ENCODE measurements at regions of chr2 and their contacts with region 1.

Region 1: GRCh38 chr2:24613154-24613814 is 122.2 kb downstream of the NCOA1 start:
- DNase-seq: peak; percentile 30
- H3K4me3 Mint-ChIP-seq: no peak overlapping the region
- H3K27ac Mint-ChIP-seq: no peak overlapping the region
- H3K4me1 Mint-ChIP-seq: no peaks in the 10 kb centered on the region
- H3K27me3 Mint-ChIP-seq: no peaks in the 10 kb centered on the region
- CTCF ChIP-seq: peak; percentile 43

Region 2: DNA sequence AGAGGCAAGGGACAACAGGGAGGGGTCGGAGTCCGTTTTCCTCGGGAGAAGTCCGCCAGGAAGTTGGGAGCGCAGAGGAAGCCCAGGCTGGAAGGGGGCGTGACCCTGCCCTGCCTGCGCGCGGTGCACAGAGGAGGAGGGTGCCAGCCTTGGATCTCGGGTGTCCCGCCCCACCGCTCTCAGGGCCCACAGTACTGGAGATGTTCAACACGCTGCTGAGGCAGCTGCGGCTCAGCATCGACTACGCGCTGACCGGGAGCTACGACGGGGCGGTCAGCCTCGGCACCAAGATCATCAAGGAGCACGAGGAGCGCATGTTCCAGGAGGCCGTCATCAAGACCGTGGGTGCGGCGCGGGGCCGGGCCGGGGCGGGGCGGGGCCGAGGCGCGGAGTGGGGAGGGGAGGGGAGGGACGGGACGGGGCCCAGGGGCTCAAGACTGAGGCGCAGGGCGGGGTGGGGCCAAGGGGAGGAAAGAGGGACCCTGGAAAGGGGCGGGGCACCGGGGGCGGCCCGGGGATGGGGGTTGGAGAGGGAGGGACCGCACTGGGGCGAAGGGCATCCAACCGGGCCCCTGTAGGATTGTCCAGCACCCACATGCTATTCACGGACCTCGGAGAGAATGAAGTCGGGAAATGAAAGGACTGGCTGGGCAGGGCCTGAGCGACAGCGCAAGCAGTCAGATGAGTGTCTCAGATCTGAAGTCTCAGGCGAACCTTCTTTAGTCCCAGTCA is 518.4 kb after region 1 on chr2:
- CTCF ChIA-PET with region 1: no interaction called
- intact Hi-C with region 1: loop called (anchors 5 kb)
- DNase-seq: peak; percentile 9
- H3K4me3 Mint-ChIP-seq: peak overlapping the region; percentile 44
- H3K27ac Mint-ChIP-seq: no peak overlapping the region
- H3K4me1 Mint-ChIP-seq: no peaks in the 10 kb centered on the region
- H3K27me3 Mint-ChIP-seq: peaks cover 70% of the 10 kb centered on the region
- CTCF ChIP-seq: no peak